Body of pancreas (tissue), 4 donors: ENCODE measurements at regions of chr14 and their contacts with region 1.

Region 1: DNA sequence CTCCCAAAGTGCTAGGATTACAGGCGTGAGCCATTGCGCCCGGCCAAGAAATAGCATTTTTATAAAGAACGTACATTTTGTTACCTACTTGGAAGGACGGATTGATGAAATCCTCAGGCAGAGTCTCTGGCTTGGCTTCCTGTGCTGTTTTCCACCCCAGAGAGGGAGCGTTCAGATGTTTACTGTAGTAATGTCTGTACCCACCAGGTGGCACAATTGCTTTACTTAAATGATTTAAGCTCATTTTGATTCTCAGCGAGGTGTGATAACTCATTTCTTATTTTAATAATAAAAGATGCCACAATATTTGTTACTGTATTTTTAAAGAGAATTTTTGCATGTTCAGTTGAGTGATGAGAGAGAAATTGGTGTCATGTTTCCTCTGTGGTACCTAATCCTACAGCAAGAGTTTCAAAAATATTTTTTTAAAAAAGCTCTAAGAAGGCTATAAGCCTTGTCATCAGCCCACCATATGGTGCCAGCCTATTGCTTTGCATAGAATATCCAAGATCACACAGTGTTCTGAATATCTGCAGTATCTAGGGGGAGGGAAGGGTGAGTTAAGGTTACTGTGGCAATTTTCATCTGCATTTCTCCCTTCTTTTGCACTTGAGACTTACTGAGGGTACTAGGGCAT is 82.6 kb upstream of the TRAF3 start:
- DNase-seq: peak; percentile 69 to 84 (median 74)
- ATAC-seq: peak; percentile 77
- H3K4me3 ChIP-seq: no peak overlapping the region
- H3K27ac ChIP-seq: no peak overlapping the region
- H3K4me1 ChIP-seq: peaks cover 38% of the 10 kb centered on the region
- H3K27me3 ChIP-seq: no peaks in the 10 kb centered on the region
- CTCF ChIP-seq: peak; percentile 17 to 80 (median 69)
- POLR2A ChIP-seq: no peak

Region 2: GRCh38 chr14:102928412-102929240 is 234.0 kb after region 1 on chr14:
- intact Hi-C with region 1: loop called (anchors 10 kb)
- DNase-seq: peak; percentile 52 to 66 (median 60)
- ATAC-seq: peak; percentile 57
- H3K4me3 ChIP-seq: no peak overlapping the region
- H3K27ac ChIP-seq: no peak overlapping the region
- H3K4me1 ChIP-seq: peaks cover 29% of the 10 kb centered on the region
- H3K27me3 ChIP-seq: peaks cover 5 to 35% of the 10 kb centered on the region in 2 donors
- CTCF ChIP-seq: no peak
- POLR2A ChIP-seq: no peak